Activated T-helper 1 cell treated with anti-CD3 and anti-CD28 coated beads, Interleukin-12 subunit alpha, Interleukin-12 subunit beta, Interleukin-2, Interleukin-4 antibody, amounts not matched to agents 30 ng/mL and 10 ng/mL and 1 ng/mL, durations not matched to agents 14 hours and 24 hours and 36 hours (primary cell): ENCODE measurements at regions of chr7 and their contacts with region 1.

Region 1: DNA sequence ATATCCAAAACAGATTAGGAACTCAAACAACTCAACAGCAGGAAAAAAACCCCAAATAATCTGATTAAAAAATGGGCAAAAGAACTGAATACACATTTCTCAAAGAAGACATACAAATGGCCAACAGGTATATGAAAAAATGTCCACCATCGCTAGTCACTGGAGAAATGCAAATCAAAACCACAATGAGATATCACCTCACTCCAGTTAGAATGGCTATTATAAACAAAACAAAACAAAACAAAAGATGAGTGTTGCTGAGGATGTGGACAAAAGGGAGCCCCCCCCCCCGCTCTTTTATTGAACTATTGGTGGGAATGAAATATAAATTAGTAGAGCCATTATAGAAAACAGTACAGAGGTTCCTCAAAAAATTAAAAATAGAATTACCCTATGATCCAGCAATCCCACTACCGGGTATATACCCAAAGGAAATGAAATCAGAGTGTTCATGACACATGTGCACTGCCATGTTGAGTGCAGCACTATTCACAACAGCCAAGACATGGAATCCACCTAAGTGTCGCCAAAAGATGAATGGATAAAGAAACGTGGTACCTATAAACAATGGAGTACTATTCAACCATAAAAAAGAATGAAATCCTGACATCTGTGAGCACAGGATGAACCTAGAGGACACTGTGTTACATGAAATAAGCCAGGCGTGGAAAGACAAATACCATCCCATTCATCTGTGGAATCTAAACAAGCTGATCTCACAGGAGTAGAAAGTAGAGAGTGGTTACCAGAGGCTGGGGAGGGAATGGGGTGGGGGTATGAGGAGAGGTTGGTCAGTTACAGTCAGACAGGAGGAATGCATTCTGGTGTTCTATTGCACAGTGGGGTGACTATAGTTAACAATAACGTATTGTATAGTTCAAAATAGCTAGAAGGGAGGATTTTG is 78.1 kb upstream of the RHEB start:
- DNase-seq: no peak
- H3K4me3 Mint-ChIP-seq: no peak overlapping the region
- H3K27ac Mint-ChIP-seq: no peak overlapping the region
- H3K4me1 Mint-ChIP-seq: no peaks in the 10 kb centered on the region
- H3K27me3 Mint-ChIP-seq: no peaks in the 10 kb centered on the region

Region 2: DNA sequence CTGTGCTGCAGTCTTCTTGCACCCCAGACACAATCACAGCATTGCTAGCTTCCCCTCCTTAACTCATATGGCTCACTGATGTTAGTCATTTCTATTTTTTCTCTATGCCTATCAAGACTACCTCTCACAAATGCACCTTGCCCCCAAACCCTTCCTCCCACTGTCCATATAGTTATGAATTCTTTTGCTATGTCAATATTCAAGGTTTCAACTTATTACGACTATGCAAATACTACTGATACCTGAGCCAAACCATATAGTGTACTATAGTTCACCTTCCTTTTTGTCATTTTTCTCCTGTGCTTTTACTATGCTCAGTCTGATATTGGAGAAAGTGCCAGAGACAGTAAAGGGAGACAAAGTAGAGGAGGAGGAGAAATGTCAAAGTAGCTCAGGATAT is 56.5 kb after region 1 on chr7:
- intact Hi-C with region 1: loop called (anchors 2 kb)
- DNase-seq: no peak
- H3K4me3 Mint-ChIP-seq: no peak overlapping the region
- H3K27ac Mint-ChIP-seq: no peak overlapping the region
- H3K4me1 Mint-ChIP-seq: no peaks in the 10 kb centered on the region
- H3K27me3 Mint-ChIP-seq: peaks cover 9% of the 10 kb centered on the region